Left colon (tissue), 2 donors: ENCODE measurements at regions of chr11 and their contacts with region 1.

Region 1: DNA sequence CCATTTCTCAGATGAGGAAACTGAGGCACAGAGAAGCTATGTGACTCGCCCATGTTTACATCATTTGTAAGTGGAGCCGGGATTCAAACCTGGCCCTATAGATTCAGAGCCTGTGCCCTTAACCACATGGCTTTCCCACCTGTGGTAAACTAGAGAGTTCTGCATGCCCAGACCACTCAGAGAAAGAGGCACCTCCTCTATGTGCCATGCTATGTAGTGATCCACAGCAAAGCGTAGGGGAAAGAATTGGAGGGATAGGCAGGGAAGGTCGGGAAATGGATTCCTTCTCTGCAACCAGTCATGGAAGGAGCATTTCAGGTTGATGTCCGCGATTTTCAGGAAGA is 15.4 kb upstream of the POU2AF2 start:
- DNase-seq: no peak
- ATAC-seq: peak; percentile 57

Region 2: GRCh38 chr11:110463153-110463552 is 766.9 kb before region 1 on chr11:
- intact Hi-C with region 1: loop called in 1 of 2 experiments (anchors 10 kb)
- DNase-seq: peak; percentile 32 to 63
- ATAC-seq: peak; percentile 90

Region 3: GRCh38 chr11:110711776-110712658 is 518.1 kb before region 1 on chr11 and contains the start of gene ARHGAP20:
- intact Hi-C with region 1: loop called in 1 of 2 experiments (anchors 5 kb)
- DNase-seq: peak; percentile 53 to 74
- ATAC-seq: peak; percentile 95
- total RNA-seq, gene ARHGAP20: 1.1 to 2.8 TPM

Region 4: GRCh38 chr11:111387363-111387762 is 157.3 kb after region 1 on chr11:
- intact Hi-C with region 1: no loop called
- DNase-seq: peak; percentile 90 to 91
- ATAC-seq: peak; percentile 98